Naive thymus-derived CD8-positive, alpha-beta T cell (primary cell): ENCODE measurements at regions of chr9 and their contacts with region 1.

Region 1: DNA sequence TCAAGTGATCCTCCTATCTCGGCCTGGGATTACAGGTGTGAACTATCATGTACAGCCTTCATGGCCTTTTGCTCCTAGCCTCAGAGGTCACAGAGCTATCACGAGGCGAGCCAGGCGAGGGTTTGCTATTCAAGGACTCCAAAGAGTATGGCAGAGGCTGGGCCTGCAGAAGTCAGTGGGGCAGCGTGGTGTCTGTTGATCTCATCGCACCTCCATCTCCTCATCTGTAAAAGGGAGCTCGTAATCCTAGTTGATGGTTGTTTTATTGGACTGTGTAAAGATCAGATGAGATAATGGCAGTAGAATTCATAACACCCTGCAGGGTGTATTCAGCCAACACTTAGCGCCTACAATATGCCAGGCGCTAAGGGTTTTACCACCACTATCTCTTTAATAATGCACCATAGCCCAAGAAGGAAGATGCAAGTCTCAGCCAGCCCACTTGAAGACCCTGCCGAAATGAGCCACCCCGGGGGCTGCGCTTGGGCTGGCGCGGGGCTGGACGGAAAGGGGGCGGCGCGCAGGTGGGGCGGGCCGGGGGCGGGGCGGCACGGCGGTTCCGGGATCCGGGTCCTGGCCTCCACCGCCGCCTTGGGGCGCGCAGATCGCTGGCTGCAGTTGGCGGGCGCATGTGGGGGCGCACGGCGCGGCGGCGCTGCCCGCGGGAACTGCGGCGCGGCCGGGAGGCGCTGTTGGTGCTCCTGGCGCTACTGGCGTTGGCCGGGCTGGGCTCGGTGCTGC is at the start of gene GALNT12:
- DNase-seq: peak; percentile 33 to 76 (median 58)
- ATAC-seq: peak; percentile 86 to 87
- H3K4me3 Mint-ChIP-seq: peak within 1 kb of the TSS; percentile 85 to 95 (median 92)
- H3K27ac Mint-ChIP-seq: peak within 1 kb of the TSS; percentile 29 to 91 (median 84)
- H3K4me1 Mint-ChIP-seq: peaks cover 24 to 40% (median 35%) of the 10 kb centered on the region in 4 donors
- H3K27me3 Mint-ChIP-seq: peaks cover 0 to 5% (median 3%) of the 10 kb centered on the region in 5 donors
- polyA plus RNA-seq, gene GALNT12: 4.6 to 8.4 (median 8.1) TPM

Region 2: GRCh38 chr9:98796364-98797101 is 10.7 kb before region 1 on chr9 and contains the start of gene ANKS6:
- POLR2A ChIA-PET with region 1: interaction called, 19 read pairs
- DNase-seq: peak; percentile 69 to 93 (median 84)
- ATAC-seq: peak; percentile 88 to 90
- H3K4me3 Mint-ChIP-seq: peak within 1 kb of the TSS; percentile 84 to 97 (median 89)
- H3K27ac Mint-ChIP-seq: peak within 1 kb of the TSS; percentile 69 to 96 (median 88)
- H3K4me1 Mint-ChIP-seq: peaks cover 25 to 39% (median 35%) of the 10 kb centered on the region in 4 donors
- H3K27me3 Mint-ChIP-seq: no peaks in the 10 kb centered on the region
- polyA plus RNA-seq, gene ANKS6: 6.3 to 12.7 (median 6.4) TPM

Region 3: GRCh38 chr9:99012942-99013512 is 205.8 kb after region 1 on chr9:
- POLR2A ChIA-PET with region 1: no interaction called
- DNase-seq: peak in 4 of 10 donors; percentile 5 to 33 (median 18)
- ATAC-seq: peak; percentile 41 to 51
- H3K4me3 Mint-ChIP-seq: peak overlapping the region; percentile 64 to 85 (median 72)
- H3K27ac Mint-ChIP-seq: peak overlapping the region; percentile 36 to 96 (median 92)
- H3K4me1 Mint-ChIP-seq: peaks cover 20 to 37% (median 24%) of the 10 kb centered on the region in 4 donors
- H3K27me3 Mint-ChIP-seq: no peaks in the 10 kb centered on the region